CD14-positive monocyte (primary cell): ENCODE measurements at regions of chrX and their contacts with region 1.

Region 1: GRCh38 chrX:129759576-129760061 is 20.1 kb upstream of the SASH3 start:
- DNase-seq: peak; percentile 81 to 84 (median 81)
- H3K4me3 ChIP-seq: no peak overlapping the region
- H3K4me3 Mint-ChIP-seq: peak overlapping the region in 1 of 2 donors; percentile 24
- H3K27ac ChIP-seq: peak overlapping the region; percentile 90 to 91
- H3K27ac Mint-ChIP-seq: peak overlapping the region; percentile 93 to 98 (median 95)
- H3K4me1 ChIP-seq: peaks cover 64 to 65% of the 10 kb centered on the region in 2 donors
- H3K4me1 Mint-ChIP-seq: peaks cover 59% of the 10 kb centered on the region
- H3K27me3 ChIP-seq: no peaks in the 10 kb centered on the region
- H3K27me3 Mint-ChIP-seq: peaks cover 0 to 11% (median 0%) of the 10 kb centered on the region in 3 donors
- CTCF ChIP-seq: peak; percentile 7

Region 2: GRCh38 chrX:129613596-129613995 is 146.0 kb before region 1 on chrX:
- intact Hi-C with region 1: no loop called
- DNase-seq: peak in 2 of 3 donors; percentile 1 to 44
- H3K4me3 ChIP-seq: no peak overlapping the region
- H3K4me3 Mint-ChIP-seq: no peak overlapping the region
- H3K27ac ChIP-seq: no peak overlapping the region
- H3K27ac Mint-ChIP-seq: no peak overlapping the region
- H3K4me1 ChIP-seq: peaks cover 10% of the 10 kb centered on the region in 2 donors
- H3K4me1 Mint-ChIP-seq: peaks cover 11% of the 10 kb centered on the region
- H3K27me3 ChIP-seq: no peaks in the 10 kb centered on the region
- H3K27me3 Mint-ChIP-seq: peaks cover 0 to 2% (median 0%) of the 10 kb centered on the region in 3 donors
- CTCF ChIP-seq: no peak

Region 3: DNA sequence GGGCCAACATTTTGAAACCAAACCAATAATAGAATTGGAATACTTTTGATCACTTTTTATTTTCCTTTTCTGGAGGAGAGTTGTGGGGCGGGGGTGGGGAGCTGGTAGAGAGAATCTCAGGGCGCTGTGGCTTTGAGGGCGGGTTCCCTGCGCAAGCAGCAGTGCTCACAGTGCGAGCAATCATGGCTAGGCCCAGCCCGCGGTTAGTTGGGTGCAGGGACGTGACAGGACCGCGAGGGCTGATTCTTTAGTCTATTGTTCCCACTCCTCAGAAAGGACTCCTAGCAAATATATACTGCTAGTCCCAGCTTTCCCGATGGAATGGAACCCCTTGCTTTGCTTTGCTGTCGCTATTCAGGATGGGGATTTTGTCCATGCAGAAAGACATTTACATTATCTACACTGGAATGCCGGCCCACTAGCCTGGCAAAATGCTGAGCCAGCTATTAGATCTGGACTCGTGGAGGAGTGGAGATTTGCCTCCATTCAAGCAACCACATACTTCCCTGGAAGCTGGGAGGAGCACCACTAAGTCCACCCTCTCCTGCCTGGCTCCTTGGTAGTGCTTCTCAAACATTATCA is 80.9 kb before region 1 on chrX:
- intact Hi-C with region 1: loop called in 1 of 2 experiments (anchors 10 kb)
- DNase-seq: no peak
- H3K4me3 ChIP-seq: peak overlapping the region; percentile 36 to 75 (median 42)
- H3K4me3 Mint-ChIP-seq: peak overlapping the region; percentile 68 to 86
- H3K27ac ChIP-seq: peak overlapping the region in 1 of 2 donors; percentile 65
- H3K27ac Mint-ChIP-seq: peak overlapping the region in 1 of 7 donors; percentile 70
- H3K4me1 ChIP-seq: peaks cover 15% of the 10 kb centered on the region in 2 donors
- H3K4me1 Mint-ChIP-seq: peaks cover 16% of the 10 kb centered on the region
- H3K27me3 ChIP-seq: no peaks in the 10 kb centered on the region
- H3K27me3 Mint-ChIP-seq: peaks cover 0 to 11% (median 2%) of the 10 kb centered on the region in 3 donors
- CTCF ChIP-seq: no peak

Region 4: GRCh38 chrX:129772796-129773431 is 13.3 kb after region 1 on chrX:
- intact Hi-C with region 1: loop called in 1 of 2 experiments (anchors 2 kb)
- DNase-seq: peak; percentile 92 to 97 (median 95)
- H3K4me3 ChIP-seq: no peak overlapping the region
- H3K4me3 Mint-ChIP-seq: peak overlapping the region; percentile 11 to 49
- H3K27ac ChIP-seq: peak overlapping the region; percentile 95 to 98
- H3K27ac Mint-ChIP-seq: peak overlapping the region; percentile 97 to 100 (median 99)
- H3K4me1 ChIP-seq: peaks cover 70 to 75% of the 10 kb centered on the region in 2 donors
- H3K4me1 Mint-ChIP-seq: peaks cover 64% of the 10 kb centered on the region
- H3K27me3 ChIP-seq: no peaks in the 10 kb centered on the region
- H3K27me3 Mint-ChIP-seq: peaks cover 0 to 10% (median 1%) of the 10 kb centered on the region in 3 donors
- CTCF ChIP-seq: no peak

Region 5: GRCh38 chrX:129808829-129809796 is 49.5 kb after region 1 on chrX:
- intact Hi-C with region 1: loop called in 1 of 2 experiments (anchors 5 kb)
- DNase-seq: peak; percentile 48 to 72 (median 60)
- H3K4me3 ChIP-seq: peak overlapping the region in 1 of 3 experiments; percentile 32
- H3K4me3 Mint-ChIP-seq: peak overlapping the region in 1 of 2 donors; percentile 35
- H3K27ac ChIP-seq: peak overlapping the region; percentile 46 to 82
- H3K27ac Mint-ChIP-seq: peak overlapping the region; percentile 86 to 95 (median 92)
- H3K4me1 ChIP-seq: peaks cover 47 to 50% of the 10 kb centered on the region in 2 donors
- H3K4me1 Mint-ChIP-seq: peaks cover 52% of the 10 kb centered on the region
- H3K27me3 ChIP-seq: no peaks in the 10 kb centered on the region
- H3K27me3 Mint-ChIP-seq: peaks cover 0 to 9% (median 0%) of the 10 kb centered on the region in 3 donors
- CTCF ChIP-seq: no peak